HEK293T (cell line): ENCODE measurements at regions of chr12 and their contacts with region 1.

Region 1: GRCh38 chr12:56127888-56128669 is at the start of gene ESYT1:
- DNase-seq: peak; percentile 95

Region 2: DNA sequence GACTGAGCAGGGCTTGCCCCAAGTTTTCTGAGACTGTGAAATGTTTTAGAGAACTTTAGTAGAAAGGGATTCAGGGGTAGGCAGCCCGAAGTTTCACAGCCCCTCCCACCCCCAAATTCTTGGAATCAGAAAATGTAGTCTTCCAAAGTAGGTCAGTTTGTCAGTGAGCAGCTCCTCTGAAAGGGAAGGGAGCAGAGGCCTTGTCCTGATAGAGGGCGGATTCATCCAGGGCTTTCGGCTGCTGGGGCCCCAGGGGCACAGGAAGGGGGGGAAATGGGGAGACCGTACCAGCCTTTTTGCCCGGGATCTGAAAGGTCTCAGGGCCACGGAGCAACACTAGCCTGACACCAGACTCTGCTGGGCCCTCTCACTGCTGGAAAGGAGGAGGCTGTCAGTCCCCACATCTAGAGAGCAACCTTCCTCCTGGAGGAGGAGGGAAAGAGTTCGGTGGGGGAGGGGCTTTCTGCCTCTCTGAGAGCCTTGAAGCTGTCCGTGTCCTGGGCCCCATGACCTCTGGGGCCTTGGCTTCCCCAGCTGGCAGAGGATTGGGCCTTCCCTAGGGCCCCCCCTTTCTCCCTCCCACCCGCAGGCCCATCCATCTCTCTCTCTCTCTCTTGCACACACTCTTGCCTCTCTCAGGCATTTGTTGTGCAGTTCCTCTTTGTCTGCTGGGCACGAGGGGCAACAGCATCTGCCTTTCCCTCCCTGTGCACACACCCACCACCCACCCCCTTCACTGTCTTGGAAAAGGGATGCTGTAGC is 107.5 kb before region 1 on chr12 and contains the start of gene IKZF4:
- CTCF ChIA-PET with region 1: no interaction called
- POLR2A ChIA-PET with region 1: no interaction called
- DNase-seq: no peak

Region 3: GRCh38 chr12:56087220-56087619 is 40.9 kb before region 1 on chr12:
- CTCF ChIA-PET with region 1: no interaction called
- POLR2A ChIA-PET with region 1: no interaction called
- DNase-seq: no peak

Region 4: DNA sequence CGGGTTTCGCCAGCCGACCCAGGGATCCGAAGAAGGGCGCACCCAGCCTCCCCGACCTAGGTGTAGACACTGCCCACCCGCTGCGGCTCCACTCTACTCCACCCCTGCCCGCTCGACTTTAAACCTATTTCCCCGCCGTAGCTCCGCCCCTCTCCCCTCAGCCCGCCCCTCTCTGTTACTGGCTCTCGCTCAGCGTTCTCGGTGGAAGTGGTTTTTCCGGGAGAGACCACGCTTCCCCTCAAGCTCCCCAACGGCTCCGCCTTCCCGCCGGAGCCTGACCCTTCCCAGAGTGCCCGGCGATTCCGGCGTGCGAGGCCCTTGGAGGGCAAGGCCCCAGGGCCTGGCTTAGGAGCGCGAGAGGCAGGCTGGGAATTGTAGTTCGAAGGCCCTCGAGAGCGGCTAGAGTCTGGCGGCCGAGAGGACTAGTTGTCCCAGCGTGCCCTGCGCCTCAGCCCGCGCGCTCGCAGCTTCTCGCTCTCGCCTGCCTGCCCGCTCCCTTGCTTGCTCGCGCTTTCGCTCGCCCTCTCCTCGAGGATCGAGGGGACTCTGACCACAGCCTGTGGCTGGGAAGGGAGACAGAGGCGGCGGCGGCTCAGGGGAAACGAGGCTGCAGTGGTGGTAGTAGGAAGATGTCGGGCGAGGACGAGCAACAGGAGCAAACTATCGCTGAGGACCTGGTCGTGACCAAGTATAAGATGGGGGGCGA is 23.8 kb before region 1 on chr12 and contains the start of gene PA2G4:
- CTCF ChIA-PET with region 1: no interaction called
- POLR2A ChIA-PET with region 1: interaction called, 16 read pairs
- DNase-seq: peak; percentile 95

Region 5: GRCh38 chr12:56143870-56144269 is 15.8 kb after region 1 on chr12:
- CTCF ChIA-PET with region 1: no interaction called
- POLR2A ChIA-PET with region 1: interaction called, 28 read pairs
- DNase-seq: no peak

Region 6: GRCh38 chr12:56152318-56153033 is 24.4 kb after region 1 on chr12 and contains the start of gene MYL6B:
- CTCF ChIA-PET with region 1: interaction called, 3 read pairs
- POLR2A ChIA-PET with region 1: interaction called, 20 read pairs
- DNase-seq: peak; percentile 90

Region 7: GRCh38 chr12:56158029-56158925 is 30.2 kb after region 1 on chr12 and contains the start of gene MYL6:
- CTCF ChIA-PET with region 1: no interaction called
- POLR2A ChIA-PET with region 1: interaction called, 23 read pairs
- DNase-seq: peak; percentile 90

Region 8: GRCh38 chr12:56189176-56189917 is 61.3 kb after region 1 on chr12 and contains the start of gene SMARCC2:
- CTCF ChIA-PET with region 1: interaction called, 11 read pairs
- POLR2A ChIA-PET with region 1: interaction called, 25 read pairs
- DNase-seq: peak; percentile 91